OCI-LY7 (cell line): ENCODE measurements at regions of chr6 and their contacts with region 1.

Region 1: GRCh38 chr6:34526992-34527728 is 29.0 kb downstream of the SPDEF start:
- DNase-seq: peak; percentile 91
- H3K4me3 ChIP-seq: peak overlapping the region; percentile 38
- H3K27ac ChIP-seq: no peak overlapping the region
- H3K4me1 ChIP-seq: peaks cover 15% of the 10 kb centered on the region
- CTCF ChIP-seq: peak; percentile 71

Region 2: GRCh38 chr6:34608321-34609091 is 81.3 kb after region 1 on chr6:
- CTCF ChIA-PET with region 1: no interaction called
- POLR2A ChIA-PET with region 1: no interaction called
- intact Hi-C with region 1: loop called (anchors 2 kb)
- DNase-seq: no peak
- H3K4me3 ChIP-seq: no peak overlapping the region
- H3K27ac ChIP-seq: no peak overlapping the region
- H3K4me1 ChIP-seq: no peaks in the 10 kb centered on the region
- CTCF ChIP-seq: no peak

Region 3: DNA sequence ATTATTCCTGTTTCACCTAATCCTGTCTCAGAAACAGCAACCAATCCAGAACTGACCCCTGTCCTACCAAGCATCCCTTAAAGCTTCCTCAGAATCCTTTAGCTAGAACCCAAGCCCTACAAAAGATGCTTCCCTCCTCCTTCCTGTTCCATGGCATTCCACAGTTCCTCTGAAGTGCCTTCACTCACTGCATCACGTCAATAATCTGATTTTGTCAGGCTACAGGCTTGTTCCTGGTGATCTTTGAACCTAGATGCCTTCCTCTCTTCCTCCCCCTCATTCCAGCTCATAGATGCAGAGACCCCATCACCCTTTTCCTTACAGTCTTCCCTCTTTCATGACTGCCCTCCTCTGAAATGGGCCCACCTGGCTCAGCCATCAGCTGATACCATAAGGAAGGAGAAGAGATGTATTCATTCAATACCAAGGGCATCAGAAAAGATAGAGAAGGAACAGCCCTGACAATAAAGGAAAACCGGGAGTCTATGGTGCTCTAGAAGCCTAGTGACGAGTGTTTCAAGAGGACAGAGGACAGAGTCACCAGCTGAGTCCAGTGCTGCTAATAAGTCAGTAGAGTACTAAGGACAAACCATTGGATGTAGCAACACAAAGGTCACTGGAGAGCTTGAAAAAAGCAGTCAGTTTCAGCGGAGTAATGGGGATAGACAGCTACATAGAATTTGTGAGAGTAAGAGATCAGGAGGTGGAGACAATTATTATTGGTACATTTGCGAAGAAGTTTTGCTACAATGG is 91.4 kb after region 1 on chr6:
- CTCF ChIA-PET with region 1: no interaction called
- POLR2A ChIA-PET with region 1: no interaction called
- intact Hi-C with region 1: no loop called
- DNase-seq: no peak
- H3K4me3 ChIP-seq: no peak overlapping the region
- H3K27ac ChIP-seq: no peak overlapping the region
- H3K4me1 ChIP-seq: no peaks in the 10 kb centered on the region
- CTCF ChIP-seq: no peak